Heart left ventricle (tissue), 16 donors: ENCODE measurements at regions of chr1 and their contacts with region 1.

Region 1: DNA sequence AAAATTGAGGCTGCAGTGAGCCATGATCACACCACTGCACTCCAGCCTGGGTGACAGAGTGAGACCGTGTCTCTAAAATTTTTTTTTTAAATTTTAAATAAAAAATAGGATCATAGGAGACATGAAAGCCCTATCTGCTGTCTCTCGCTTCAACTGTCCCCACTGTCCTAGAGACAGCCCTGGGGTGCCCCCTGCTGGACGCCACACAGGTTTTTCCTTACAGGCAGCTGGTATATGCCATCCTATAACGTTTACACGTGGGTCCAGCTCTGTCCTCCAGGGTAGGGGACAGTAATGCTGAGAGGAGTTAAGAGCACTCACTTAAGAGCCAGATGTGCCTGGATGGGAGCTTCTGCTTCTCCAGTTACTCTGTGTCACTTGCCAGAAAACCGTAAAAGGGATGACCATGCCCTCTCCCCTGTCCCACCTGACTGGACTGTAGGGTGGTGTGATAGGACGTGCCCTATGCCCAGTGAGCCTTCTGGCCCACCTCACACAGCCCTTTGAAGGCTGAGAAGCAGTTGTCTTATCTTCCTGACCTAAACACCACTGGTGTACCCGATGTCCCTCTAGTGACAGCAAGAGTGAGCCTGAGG is 8.5 kb downstream of the FBXO2 start:
- DNase-seq: peak; percentile 73 to 90 (median 76)
- ATAC-seq: peak in 3 of 4 donors; percentile 46 to 58 (median 57)
- H3K4me3 ChIP-seq: no peak overlapping the region
- H3K27ac ChIP-seq: no peak overlapping the region
- H3K4me1 ChIP-seq: peaks cover 0 to 33% (median 15%) of the 10 kb centered on the region in 12 donors
- H3K27me3 ChIP-seq: peaks cover 0 to 48% (median 17%) of the 10 kb centered on the region in 9 donors
- CTCF ChIP-seq: peak; percentile 61 to 84 (median 78)
- POLR2A ChIP-seq: no peak

Region 2: DNA sequence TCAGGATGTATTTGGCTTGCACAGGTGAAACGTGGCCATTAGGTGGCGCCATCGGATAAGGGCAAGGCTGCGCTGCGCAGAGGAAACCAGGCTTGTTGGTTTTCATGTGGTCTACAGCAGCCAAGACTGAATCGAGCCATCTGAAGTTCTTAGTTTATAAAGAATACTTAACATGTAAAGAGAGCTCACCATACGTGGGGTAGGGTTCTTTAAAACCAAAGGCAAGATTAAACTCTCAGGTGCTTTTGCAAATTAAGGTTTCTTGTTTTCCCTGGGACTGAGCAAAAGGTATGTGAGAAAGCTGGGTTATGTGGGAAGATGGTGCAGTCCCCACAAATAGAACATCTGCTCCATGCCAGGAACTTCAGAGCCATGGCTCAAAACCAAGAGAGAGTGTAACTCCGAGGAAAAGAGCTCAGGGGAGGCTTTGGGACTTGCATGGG is 608.0 kb before region 1 on chr1:
- intact Hi-C with region 1: loop called in 9 of 10 experiments (anchors 2 to 5 kb)
- DNase-seq: peak; percentile 80 to 92 (median 86)
- ATAC-seq: peak; percentile 88 to 97 (median 94)
- H3K4me3 ChIP-seq: peak overlapping the region in 1 of 12 donors; percentile 27
- H3K27ac ChIP-seq: no peak overlapping the region
- H3K4me1 ChIP-seq: peaks cover 0 to 9% (median 6%) of the 10 kb centered on the region in 12 donors
- H3K27me3 ChIP-seq: no peaks in the 10 kb centered on the region
- CTCF ChIP-seq: peak; percentile 87 to 99 (median 97)
- POLR2A ChIP-seq: no peak

Region 3: GRCh38 chr1:11248155-11248554 is 397.6 kb before region 1 on chr1:
- intact Hi-C with region 1: loop called in 8 of 10 experiments (anchors 2 to 5 kb)
- DNase-seq: no peak
- ATAC-seq: no peak
- H3K4me3 ChIP-seq: no peak overlapping the region
- H3K27ac ChIP-seq: no peak overlapping the region
- H3K4me1 ChIP-seq: no peaks in the 10 kb centered on the region
- H3K27me3 ChIP-seq: no peaks in the 10 kb centered on the region
- CTCF ChIP-seq: no peak
- POLR2A ChIP-seq: no peak

Region 4: DNA sequence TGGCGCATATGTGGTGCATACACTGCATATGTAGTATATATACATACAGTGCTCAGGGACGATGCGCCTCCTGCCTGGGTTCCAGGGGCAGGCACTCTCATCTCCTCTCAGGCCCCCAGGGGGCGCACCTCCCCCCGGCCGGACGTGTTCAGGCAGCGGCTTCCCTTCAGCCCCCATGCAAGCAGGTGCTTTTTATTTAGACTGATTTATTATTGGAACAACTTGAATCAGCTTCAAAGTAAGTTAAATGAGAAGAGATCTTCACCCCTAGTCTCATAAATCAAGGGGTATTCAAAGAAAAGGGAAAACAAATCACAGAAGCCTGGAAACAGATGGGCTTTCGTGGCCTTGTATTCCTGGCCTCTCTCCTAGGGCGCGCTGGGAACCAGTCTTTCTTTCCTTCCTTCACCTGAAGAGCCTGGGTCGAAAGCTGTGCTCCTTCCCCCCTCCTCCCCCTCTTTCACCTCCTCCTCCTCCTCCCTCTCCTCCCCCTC is 308.1 kb before region 1 on chr1:
- intact Hi-C with region 1: loop called in 9 of 10 experiments (anchors 1 to 5 kb)
- DNase-seq: peak in 4 of 5 donors; percentile 19 to 50 (median 36)
- ATAC-seq: peak in 2 of 4 donors; percentile 50 to 66
- H3K4me3 ChIP-seq: no peak overlapping the region
- H3K27ac ChIP-seq: no peak overlapping the region
- H3K4me1 ChIP-seq: no peaks in the 10 kb centered on the region
- H3K27me3 ChIP-seq: peaks cover 0 to 67% (median 30%) of the 10 kb centered on the region in 9 donors
- CTCF ChIP-seq: peak; percentile 60 to 81 (median 70)
- POLR2A ChIP-seq: no peak

Region 5: GRCh38 chr1:11478571-11479374 is 167.0 kb before region 1 on chr1 and contains the start of gene DISP3:
- intact Hi-C with region 1: loop called in 7 of 10 experiments (anchors 2 to 5 kb)
- DNase-seq: peak; percentile 38 to 74 (median 56)
- ATAC-seq: peak; percentile 53 to 82 (median 78)
- H3K4me3 ChIP-seq: peak within 1 kb of the TSS; percentile 19 to 64 (median 56)
- H3K27ac ChIP-seq: no peak within 1 kb of the TSS
- H3K4me1 ChIP-seq: peaks cover 0 to 20% (median 15%) of the 10 kb centered on the region in 12 donors
- H3K27me3 ChIP-seq: peaks cover 14 to 83% (median 39%) of the 10 kb centered on the region in 9 donors
- CTCF ChIP-seq: peak; percentile 30 to 69 (median 54)
- POLR2A ChIP-seq: peak in 1 of 2 donors; percentile 32
- total RNA-seq, gene DISP3: 0.05 to 0.45 (median 0.17) TPM in 5 of 9 donors, not detected in the others

Region 6: GRCh38 chr1:11550664-11551283 is 95.0 kb before region 1 on chr1:
- intact Hi-C with region 1: no loop called
- DNase-seq: peak in 4 of 5 donors; percentile 51 to 69 (median 60)
- ATAC-seq: peak in 3 of 4 donors; percentile 60 to 81 (median 73)
- H3K4me3 ChIP-seq: no peak overlapping the region
- H3K27ac ChIP-seq: no peak overlapping the region
- H3K4me1 ChIP-seq: no peaks in the 10 kb centered on the region
- H3K27me3 ChIP-seq: peaks cover 0 to 25% (median 3%) of the 10 kb centered on the region in 9 donors
- CTCF ChIP-seq: no peak
- POLR2A ChIP-seq: no peak

Region 7: DNA sequence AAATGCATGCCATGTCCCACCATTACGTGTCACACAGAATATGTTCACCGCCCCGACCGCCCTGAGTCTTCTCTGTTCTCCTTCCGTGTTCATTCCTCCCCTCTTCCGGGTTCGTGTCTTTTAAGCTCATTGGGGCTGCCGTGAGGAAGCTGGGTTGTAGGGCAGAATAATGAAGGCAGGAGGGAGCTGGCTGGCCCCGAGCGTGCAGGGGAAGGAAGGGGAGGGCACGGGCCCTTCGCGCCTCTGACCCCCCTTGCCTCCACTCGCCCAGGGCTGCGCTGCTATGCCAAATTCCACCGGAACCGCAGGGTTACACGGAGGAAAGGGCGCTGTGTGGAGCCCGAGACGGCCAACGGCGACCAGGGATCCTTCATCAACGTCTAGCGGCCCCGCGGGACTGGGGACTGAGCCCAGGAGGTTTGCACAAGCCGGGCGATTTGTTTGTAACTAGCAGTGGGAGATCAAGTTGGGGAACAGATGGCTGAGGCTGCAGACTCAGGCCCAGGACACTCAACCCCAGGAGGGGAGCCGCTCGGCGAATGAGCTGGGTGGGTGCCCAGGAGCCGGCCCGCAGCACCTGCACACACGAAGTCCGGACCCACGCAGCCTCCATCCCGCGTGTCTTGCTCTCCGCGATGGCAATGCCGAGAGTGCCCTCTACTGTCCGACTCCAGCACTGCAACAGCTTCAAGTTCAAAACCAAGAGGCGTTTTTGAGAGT is 73.7 kb after region 1 on chr1:
- intact Hi-C with region 1: loop called in 7 of 10 experiments (anchors 1 to 5 kb)
- DNase-seq: peak; percentile 73 to 90 (median 82)
- ATAC-seq: peak; percentile 53 to 87 (median 84)
- H3K4me3 ChIP-seq: peak overlapping the region in 11 of 12 donors; percentile 14 to 59 (median 44)
- H3K27ac ChIP-seq: peak overlapping the region in 4 of 12 donors; percentile 7 to 87 (median 36)
- H3K4me1 ChIP-seq: peaks cover 0 to 13% (median 9%) of the 10 kb centered on the region in 12 donors
- H3K27me3 ChIP-seq: peaks cover 0 to 11% (median 0%) of the 10 kb centered on the region in 9 donors
- CTCF ChIP-seq: peak; percentile 90 to 99 (median 97)
- POLR2A ChIP-seq: no peak

Region 8: DNA sequence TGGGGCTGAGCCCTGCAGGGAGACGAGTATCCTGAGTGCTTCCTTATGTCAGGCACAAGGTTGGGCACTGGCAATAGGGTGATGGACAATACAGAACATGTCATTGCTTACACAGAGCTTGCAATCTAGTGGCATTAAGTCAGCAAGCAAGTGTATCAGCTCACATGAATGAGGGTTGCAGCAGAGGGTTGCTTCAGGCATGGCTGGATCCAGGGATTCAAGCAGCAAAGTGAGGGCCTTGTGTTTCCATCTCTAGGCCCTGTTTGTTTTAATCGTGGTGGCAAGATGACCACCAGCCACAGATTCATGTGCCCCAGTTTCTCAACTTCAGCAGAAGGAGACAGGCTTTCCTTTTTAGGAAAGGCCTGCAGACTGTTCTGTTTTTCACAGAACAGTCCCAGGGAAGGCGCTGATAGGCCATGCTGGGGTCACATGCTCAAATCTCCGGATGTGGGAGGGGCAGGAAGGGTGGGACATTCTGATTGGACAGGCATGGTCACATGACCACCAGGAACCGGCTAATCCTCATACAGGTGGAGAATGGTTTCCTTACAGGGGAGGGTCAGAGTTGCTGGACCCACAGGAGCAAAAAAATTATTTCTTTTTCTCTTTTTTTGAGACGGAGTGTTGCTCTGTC is 303.2 kb after region 1 on chr1:
- intact Hi-C with region 1: no loop called
- DNase-seq: no peak
- ATAC-seq: no peak
- H3K4me3 ChIP-seq: no peak overlapping the region
- H3K27ac ChIP-seq: no peak overlapping the region
- H3K4me1 ChIP-seq: peaks cover 0 to 11% (median under 1%) of the 10 kb centered on the region in 12 donors
- H3K27me3 ChIP-seq: no peaks in the 10 kb centered on the region
- CTCF ChIP-seq: no peak
- POLR2A ChIP-seq: no peak